GM10248 (cell line): ENCODE measurements at regions of chr14 and their contacts with region 1.

Region 1: DNA sequence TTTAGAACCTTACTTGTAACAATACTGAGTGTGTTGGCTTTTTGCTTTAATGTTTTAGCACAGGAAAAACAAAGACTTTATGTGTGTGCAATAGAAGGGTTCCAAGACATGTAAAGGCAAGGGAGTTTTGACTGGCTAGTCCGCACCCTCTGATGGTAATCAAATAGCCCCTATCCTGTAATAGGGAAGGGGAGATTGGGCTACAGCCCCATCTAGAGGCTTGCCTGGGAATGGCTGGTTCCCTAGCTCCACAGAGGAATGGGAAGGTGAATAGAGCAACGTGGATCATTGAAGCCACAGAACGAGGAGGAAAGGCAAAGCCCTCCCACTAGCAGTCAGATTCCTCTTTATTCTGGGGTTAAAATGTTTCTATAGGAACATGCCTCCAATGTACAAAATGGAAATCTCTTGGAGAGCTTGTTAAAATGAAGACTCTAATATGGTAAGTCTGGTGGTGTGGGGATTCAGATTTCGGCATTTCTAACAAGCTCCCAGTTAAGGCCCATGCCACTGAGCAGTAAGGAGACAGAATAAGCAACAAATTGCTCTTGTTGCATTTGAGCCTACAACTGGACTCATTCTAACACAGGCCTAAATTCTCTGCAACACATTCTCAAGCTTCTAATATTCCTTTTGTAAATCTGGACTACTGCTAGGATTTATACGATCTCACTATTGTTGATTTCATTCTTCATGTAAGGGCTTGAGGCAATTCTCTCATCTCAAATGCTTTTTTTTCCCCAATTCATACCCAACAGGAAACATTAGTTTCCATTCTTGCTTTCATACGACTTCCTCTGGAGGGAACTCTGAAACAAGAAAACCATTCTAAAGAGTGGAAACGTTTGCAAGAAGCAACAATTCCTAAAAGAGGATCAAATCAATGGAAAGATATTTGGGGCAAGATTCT is 57.1 kb downstream of the NIN start:
- DNase-seq: no peak
- CTCF ChIP-seq: peak; percentile 77

Region 2: GRCh38 chr14:50542941-50543418 is 230.9 kb before region 1 on chr14:
- CTCF ChIA-PET with region 1: interaction called, 84 read pairs
- POLR2A ChIA-PET with region 1: no interaction called
- DNase-seq: peak; percentile 63
- CTCF ChIP-seq: peak; percentile 45

Region 3: DNA sequence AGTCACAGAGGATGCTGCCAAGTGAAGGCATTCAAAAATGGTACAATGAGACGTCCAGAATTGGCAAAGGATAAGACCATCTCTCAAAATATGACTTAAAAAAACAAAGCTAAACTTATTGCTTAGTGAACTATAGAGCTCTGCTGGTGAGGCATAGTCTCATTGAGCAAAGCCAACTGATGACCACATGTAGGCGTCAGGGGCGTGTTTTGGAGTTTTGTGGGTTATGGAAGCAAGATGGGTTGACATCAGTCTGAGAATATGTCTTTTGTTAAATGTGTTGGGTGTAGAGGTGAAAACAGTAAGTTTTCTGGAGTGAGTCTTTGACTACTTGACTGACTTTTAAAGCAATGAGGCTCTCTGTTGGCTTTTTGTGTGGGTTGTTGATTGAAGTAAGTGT is 166.7 kb before region 1 on chr14:
- CTCF ChIA-PET with region 1: interaction called, 18 read pairs
- POLR2A ChIA-PET with region 1: no interaction called
- DNase-seq: no peak
- CTCF ChIP-seq: no peak

Region 4: GRCh38 chr14:50631408-50631821 is 142.5 kb before region 1 on chr14:
- CTCF ChIA-PET with region 1: interaction called, 15 read pairs
- POLR2A ChIA-PET with region 1: no interaction called
- DNase-seq: no peak
- CTCF ChIP-seq: no peak

Region 5: GRCh38 chr14:50688875-50689274 is 85.0 kb before region 1 on chr14:
- CTCF ChIA-PET with region 1: no interaction called
- POLR2A ChIA-PET with region 1: no interaction called
- DNase-seq: no peak
- CTCF ChIP-seq: no peak

Region 6: DNA sequence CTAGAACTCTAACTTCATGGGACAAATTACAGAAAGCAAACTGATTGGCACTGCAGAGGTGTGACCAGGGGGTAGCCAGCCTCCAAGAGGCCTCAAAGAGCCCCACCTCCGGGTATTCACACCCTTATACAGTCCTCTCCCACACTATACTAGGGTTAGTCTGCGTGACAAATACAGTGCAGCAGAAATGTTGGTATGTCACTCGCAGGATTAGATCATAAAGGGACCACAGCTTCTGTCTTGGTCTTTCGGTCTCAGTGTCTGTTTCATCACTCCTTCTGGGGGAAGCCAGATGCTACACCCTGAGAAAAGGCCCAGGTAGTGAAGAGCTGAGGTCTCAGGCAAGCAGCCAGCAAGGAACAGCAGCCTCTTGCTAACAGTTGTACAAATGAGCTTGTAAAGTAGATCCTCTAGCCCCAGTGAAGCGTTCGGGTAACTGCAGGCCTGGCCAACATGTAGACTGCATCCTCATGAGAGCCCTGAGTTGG is 36.9 kb before region 1 on chr14:
- CTCF ChIA-PET with region 1: interaction called, 12 read pairs
- POLR2A ChIA-PET with region 1: no interaction called
- DNase-seq: peak; percentile 70
- CTCF ChIP-seq: no peak

Region 7: DNA sequence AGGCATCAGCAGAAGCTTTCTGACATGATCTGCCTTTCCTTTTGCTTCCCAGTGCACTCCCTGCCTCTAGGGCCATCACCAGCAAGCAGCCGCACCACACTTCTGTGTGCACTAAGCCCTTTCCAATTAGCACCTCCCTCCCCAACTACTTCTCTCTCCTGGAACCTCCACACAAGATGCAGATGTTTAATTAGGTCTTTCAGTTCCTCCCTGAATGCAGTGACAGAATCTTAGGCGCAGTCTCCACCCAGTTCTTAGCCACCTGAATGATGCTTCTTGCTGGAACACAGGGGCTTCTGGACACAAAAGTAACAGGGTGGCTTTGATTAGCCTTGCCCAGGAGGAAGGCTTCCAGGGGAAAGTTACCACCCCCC is 24.1 kb after region 1 on chr14:
- CTCF ChIA-PET with region 1: interaction called, 207 read pairs
- POLR2A ChIA-PET with region 1: no interaction called
- DNase-seq: peak; percentile 53
- CTCF ChIP-seq: no peak

Region 8: GRCh38 chr14:50855558-50855957 is 81.7 kb after region 1 on chr14:
- CTCF ChIA-PET with region 1: interaction called, 38 read pairs
- POLR2A ChIA-PET with region 1: no interaction called
- DNase-seq: no peak
- CTCF ChIP-seq: no peak